Posterior vena cava (tissue), 2 donors: ENCODE measurements at regions of chr13 and their contacts with region 1.

Region 1: GRCh38 chr13:48492470-48493065 is 40.3 kb downstream of the RCBTB2 start:
- DNase-seq: peak; percentile 92

Region 2: DNA sequence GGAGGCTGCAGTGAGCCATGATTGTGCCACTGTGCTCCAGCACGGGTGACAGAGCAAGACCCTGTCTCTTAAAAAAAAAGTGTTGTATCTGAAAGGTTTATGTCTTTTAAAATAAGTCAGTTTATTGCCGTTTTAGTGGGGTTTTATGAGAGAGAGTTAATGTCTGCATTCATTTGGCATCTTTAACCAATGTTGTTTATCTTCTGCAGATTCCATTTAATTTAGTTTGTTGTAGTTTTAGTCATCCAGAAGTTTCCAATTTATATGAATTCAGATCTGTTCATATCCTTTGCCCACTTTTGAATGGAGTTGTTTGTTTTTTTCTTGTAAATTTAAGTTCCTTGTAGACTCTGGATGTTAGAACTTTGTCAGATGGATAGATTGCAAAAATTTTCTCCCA is 42.9 kb before region 1 on chr13:
- intact Hi-C with region 1: loop called in 1 of 2 experiments (anchors 2 kb)
- DNase-seq: no peak